GM12878 (cell line): ENCODE measurements at regions of chr12 and their contacts with region 1.

Region 1: GRCh38 chr12:1093166-1093751 is 102.2 kb downstream of the ERC1 start:
- DNase-seq: no peak
- ATAC-seq: peak; percentile 77
- H3K4me3 ChIP-seq: no peak overlapping the region
- H3K27ac ChIP-seq: no peak overlapping the region
- H3K4me1 ChIP-seq: peaks cover 18% of the 10 kb centered on the region
- H3K27me3 ChIP-seq: no peaks in the 10 kb centered on the region
- CTCF ChIP-seq: peak; percentile 60 to 85 (median 81)
- EP300 ChIP-seq: no peak
- POLR2A ChIP-seq: no peak
- RAD21 ChIP-seq: peak; percentile 93

Region 2: GRCh38 chr12:304805-305204 is 788.5 kb before region 1 on chr12:
- CTCF ChIA-PET with region 1: no interaction called
- POLR2A ChIA-PET with region 1: no interaction called
- RAD21 ChIA-PET with region 1: no interaction called
- SMC1A ChIA-PET with region 1: no interaction called
- in situ Hi-C with region 1: no loop called
- intact Hi-C with region 1: no loop called
- DNase-seq: no peak
- ATAC-seq: no peak
- H3K4me3 ChIP-seq: no peak overlapping the region
- H3K27ac ChIP-seq: no peak overlapping the region
- H3K4me1 ChIP-seq: no peaks in the 10 kb centered on the region
- H3K27me3 ChIP-seq: no peaks in the 10 kb centered on the region
- CTCF ChIP-seq: no peak
- EP300 ChIP-seq: no peak
- POLR2A ChIP-seq: no peak
- RAD21 ChIP-seq: no peak

Region 3: GRCh38 chr12:569803-570434 is 523.3 kb before region 1 on chr12:
- CTCF ChIA-PET with region 1: interaction called, 10 read pairs
- POLR2A ChIA-PET with region 1: no interaction called
- RAD21 ChIA-PET with region 1: interaction called, 10 read pairs
- SMC1A ChIA-PET with region 1: interaction called, 5 read pairs
- in situ Hi-C with region 1: loop called (anchors 5 kb)
- intact Hi-C with region 1: loop called (anchors 5 kb)
- DNase-seq: no peak
- ATAC-seq: peak; percentile 97
- H3K4me3 ChIP-seq: peak overlapping the region; percentile 64
- H3K27ac ChIP-seq: no peak overlapping the region
- H3K4me1 ChIP-seq: no peaks in the 10 kb centered on the region
- H3K27me3 ChIP-seq: no peaks in the 10 kb centered on the region
- CTCF ChIP-seq: peak; percentile 91 to 94 (median 92)
- EP300 ChIP-seq: no peak
- POLR2A ChIP-seq: no peak
- RAD21 ChIP-seq: peak; percentile 92

Region 4: DNA sequence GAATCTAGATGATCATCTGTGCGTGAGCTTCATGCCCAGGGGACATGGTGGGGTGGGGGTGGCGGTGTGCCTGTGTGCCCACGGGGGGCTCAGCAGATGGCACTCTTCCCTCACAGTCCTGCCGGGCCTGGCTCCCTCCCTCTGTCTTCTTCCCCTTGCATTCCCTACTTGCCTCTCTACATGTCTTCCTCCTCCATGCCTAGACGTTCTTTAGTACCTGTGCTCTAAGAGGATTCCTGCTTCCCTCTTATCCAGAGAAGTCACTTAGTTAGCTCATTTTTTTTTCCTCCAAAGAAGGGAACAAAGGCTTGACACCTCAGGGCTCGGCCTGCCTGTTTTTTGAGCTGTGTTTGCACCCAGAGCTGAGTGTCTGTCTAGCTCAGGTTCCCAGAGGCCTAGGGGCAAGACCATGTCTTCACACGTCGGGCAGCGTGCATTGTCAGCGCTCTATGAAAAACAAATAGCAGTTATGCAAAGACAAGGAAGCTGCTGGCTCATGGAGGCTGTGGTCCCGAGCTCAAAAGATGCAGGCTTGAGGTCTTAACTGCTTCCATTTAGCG is 478.8 kb before region 1 on chr12:
- CTCF ChIA-PET with region 1: interaction called, 5 read pairs
- POLR2A ChIA-PET with region 1: no interaction called
- RAD21 ChIA-PET with region 1: interaction called, 11 read pairs
- SMC1A ChIA-PET with region 1: interaction called, 3 read pairs
- in situ Hi-C with region 1: no loop called
- intact Hi-C with region 1: no loop called
- DNase-seq: no peak
- ATAC-seq: peak; percentile 78
- H3K4me3 ChIP-seq: no peak overlapping the region
- H3K27ac ChIP-seq: no peak overlapping the region
- H3K4me1 ChIP-seq: peaks cover 10% of the 10 kb centered on the region
- H3K27me3 ChIP-seq: no peaks in the 10 kb centered on the region
- CTCF ChIP-seq: peak; percentile 61 to 86 (median 63)
- EP300 ChIP-seq: no peak
- POLR2A ChIP-seq: no peak
- RAD21 ChIP-seq: peak; percentile 75

Region 5: GRCh38 chr12:958588-959123 is 134.6 kb before region 1 on chr12:
- CTCF ChIA-PET with region 1: interaction called, 10 read pairs
- POLR2A ChIA-PET with region 1: interaction called, 3 read pairs
- RAD21 ChIA-PET with region 1: interaction called, 6 read pairs
- SMC1A ChIA-PET with region 1: interaction called, 6 read pairs
- in situ Hi-C with region 1: no loop called
- intact Hi-C with region 1: no loop called
- DNase-seq: peak; percentile 61
- ATAC-seq: peak; percentile 93
- H3K4me3 ChIP-seq: no peak overlapping the region
- H3K27ac ChIP-seq: no peak overlapping the region
- H3K4me1 ChIP-seq: peaks cover 4% of the 10 kb centered on the region; the same call in 1 of the 2 replicates
- H3K27me3 ChIP-seq: peaks cover 0 to 8% of the 10 kb centered on the region in 2 experiments; a peak in 1 of 4 replicates
- CTCF ChIP-seq: no peak
- EP300 ChIP-seq: peak; percentile 73 to 78; a peak in 3 of 4 replicates
- POLR2A ChIP-seq: no peak
- RAD21 ChIP-seq: 0 out of 2 replicates have a peak, but pooled peaks have one; percentile 1

Region 6: GRCh38 chr12:1108276-1108675 is 15.0 kb after region 1 on chr12:
- CTCF ChIA-PET with region 1: interaction called, 21 read pairs
- POLR2A ChIA-PET with region 1: interaction called, 5 read pairs
- RAD21 ChIA-PET with region 1: interaction called, 12 read pairs
- SMC1A ChIA-PET with region 1: interaction called, 8 read pairs
- in situ Hi-C with region 1: no loop called
- intact Hi-C with region 1: no loop called
- DNase-seq: peak; percentile 59
- ATAC-seq: peak; percentile 99
- H3K4me3 ChIP-seq: no peak overlapping the region
- H3K27ac ChIP-seq: no peak overlapping the region
- H3K4me1 ChIP-seq: peaks cover 5% of the 10 kb centered on the region; the same call in 1 of the 2 replicates
- H3K27me3 ChIP-seq: no peaks in the 10 kb centered on the region
- CTCF ChIP-seq: no peak
- EP300 ChIP-seq: 0 out of 4 replicates have a peak, but pooled peaks of 1 of the 2 experiments have one; percentile 35
- POLR2A ChIP-seq: no peak
- RAD21 ChIP-seq: no peak